ENCODE measurements at regions of chr2 and their contacts with region 1.

Region 1: GRCh38 chr2:231604685-231605606 is 12.3 kb downstream of the TEX44 start:
- DNase-seq: peak; percentile 100
- ATAC-seq: peak; percentile 88
- H3K4me3 ChIP-seq: peak overlapping the region in 4 of 5 experiments; percentile 55 to 65 (median 60)
- H3K4me3 Mint-ChIP-seq: peak overlapping the region; percentile 82
- H3K27ac ChIP-seq: peak overlapping the region; percentile 94
- H3K27ac Mint-ChIP-seq: peak overlapping the region; percentile 97
- H3K4me1 ChIP-seq: peaks cover 17 to 25% of the 10 kb centered on the region in 2 donors
- H3K4me1 Mint-ChIP-seq: peaks cover 31% of the 10 kb centered on the region
- H3K27me3 ChIP-seq: no peaks in the 10 kb centered on the region
- H3K27me3 Mint-ChIP-seq: no peaks in the 10 kb centered on the region
- CTCF ChIP-seq: no peak

Region 2: DNA sequence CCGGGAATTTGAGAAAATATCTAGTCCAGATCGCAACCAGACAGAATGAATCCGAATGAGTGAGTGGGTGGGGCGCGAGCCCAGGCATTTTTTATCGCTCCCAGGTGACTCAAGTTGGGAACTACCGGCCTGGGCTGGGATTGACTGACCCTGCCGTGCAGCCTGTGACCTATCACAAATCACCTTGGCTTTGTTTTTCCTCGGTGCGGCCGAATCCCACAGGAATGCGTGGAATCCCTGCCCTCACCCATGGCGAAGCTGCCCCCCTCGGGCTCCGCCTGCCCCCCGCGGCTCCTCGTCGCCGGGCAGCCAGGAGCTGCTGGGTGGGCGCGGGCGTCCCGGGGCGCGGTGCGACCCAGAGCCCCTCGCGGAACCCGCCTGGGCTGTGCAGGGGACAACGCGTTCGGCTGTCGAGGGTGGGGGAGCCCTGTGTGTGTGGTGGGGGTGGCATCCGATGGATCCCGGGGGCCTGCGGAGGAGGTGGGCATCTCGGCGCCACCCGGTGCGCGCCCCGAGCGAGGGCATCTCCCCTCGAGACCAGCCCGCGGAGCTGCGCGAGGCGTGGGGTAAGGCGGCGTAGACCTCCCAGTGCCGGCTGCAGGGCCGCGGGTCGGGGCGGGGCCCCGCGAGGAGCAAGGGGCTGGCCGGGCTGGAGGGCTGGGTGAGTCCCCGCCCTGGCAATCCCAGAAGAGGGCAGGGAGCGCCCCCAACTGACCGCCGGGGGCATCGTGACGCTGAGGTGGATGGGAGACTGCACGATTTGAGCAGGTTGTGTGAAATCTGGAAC is 192.9 kb before region 1 on chr2:
- CTCF ChIA-PET with region 1: no interaction called
- POLR2A ChIA-PET with region 1: no interaction called
- intact Hi-C with region 1: no loop called
- DNase-seq: peak; percentile 88
- ATAC-seq: peak; percentile 100
- H3K4me3 ChIP-seq: peak overlapping the region in 4 of 5 experiments; percentile 10 to 62 (median 52)
- H3K4me3 Mint-ChIP-seq: peak overlapping the region; percentile 80
- H3K27ac ChIP-seq: no peak overlapping the region
- H3K27ac Mint-ChIP-seq: no peak overlapping the region
- H3K4me1 ChIP-seq: peaks cover 12 to 13% of the 10 kb centered on the region in 2 donors
- H3K4me1 Mint-ChIP-seq: peaks cover 7% of the 10 kb centered on the region
- H3K27me3 ChIP-seq: peaks cover 0 to 24% (median 10%) of the 10 kb centered on the region in 4 experiments
- H3K27me3 Mint-ChIP-seq: peaks cover 21% of the 10 kb centered on the region
- CTCF ChIP-seq: peak; percentile 87

Region 3: DNA sequence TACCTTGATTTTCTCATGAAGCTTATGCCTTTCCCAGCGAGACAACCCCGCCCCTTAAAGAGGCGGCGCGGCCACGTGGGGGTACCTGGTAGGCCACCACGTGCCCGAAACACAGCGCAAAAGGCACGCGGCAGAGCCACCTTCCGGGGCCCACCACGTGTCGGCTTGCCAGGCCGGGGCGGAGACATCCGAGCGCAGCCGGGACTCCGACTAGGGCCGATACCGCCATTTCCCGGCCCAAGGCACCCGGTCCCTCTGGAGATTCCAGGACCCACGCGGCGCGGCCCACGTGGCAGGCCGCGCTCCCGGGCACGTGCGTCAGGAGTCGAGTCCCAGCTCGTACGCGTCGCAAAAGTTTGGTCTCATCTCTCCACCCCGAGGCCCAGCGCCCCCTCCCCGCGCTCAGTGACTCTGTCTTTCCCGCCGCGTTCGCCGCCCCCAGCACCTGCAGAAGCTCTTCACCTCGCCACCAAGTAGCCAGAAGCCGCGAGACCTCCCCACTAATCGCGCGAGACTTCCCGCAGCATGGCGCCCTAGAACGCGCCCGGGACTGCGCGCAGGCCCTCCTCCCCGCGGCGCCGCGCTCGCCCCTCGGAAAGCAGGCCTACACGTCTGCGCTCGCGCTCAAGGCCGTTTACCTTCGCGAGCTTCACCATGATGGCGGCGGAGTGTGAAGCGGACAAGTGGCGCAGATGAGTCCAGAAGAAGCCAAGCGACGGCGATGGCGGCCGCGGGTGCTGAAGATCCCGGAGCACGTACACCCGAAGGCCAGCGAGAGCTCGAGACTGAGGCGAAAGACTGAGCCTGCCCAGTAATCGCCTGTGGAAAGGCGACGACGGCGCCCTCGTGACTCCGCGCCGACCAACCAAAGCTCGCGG is 141.0 kb before region 1 on chr2 and contains the start of gene NCL:
- CTCF ChIA-PET with region 1: no interaction called
- POLR2A ChIA-PET with region 1: interaction called, 8 read pairs
- intact Hi-C with region 1: loop called (anchors 1 kb)
- DNase-seq: peak; percentile 98
- ATAC-seq: peak; percentile 51
- H3K4me3 ChIP-seq: peak within 1 kb of the TSS; percentile 62 to 97 (median 93)
- H3K4me3 Mint-ChIP-seq: peak within 1 kb of the TSS; percentile 99
- H3K27ac ChIP-seq: peak within 1 kb of the TSS; percentile 97 to 98
- H3K27ac Mint-ChIP-seq: peak within 1 kb of the TSS; percentile 100
- H3K4me1 ChIP-seq: peaks cover 29 to 33% of the 10 kb centered on the region in 2 donors
- H3K4me1 Mint-ChIP-seq: peaks cover 46% of the 10 kb centered on the region
- H3K27me3 ChIP-seq: no peaks in the 10 kb centered on the region
- H3K27me3 Mint-ChIP-seq: no peaks in the 10 kb centered on the region
- CTCF ChIP-seq: no peak
- total RNA-seq, gene NCL: 383 and 439 TPM in 2 replicates

Region 4: GRCh38 chr2:231514103-231514950 is 90.6 kb before region 1 on chr2:
- CTCF ChIA-PET with region 1: interaction called, 19 read pairs
- POLR2A ChIA-PET with region 1: no interaction called
- intact Hi-C with region 1: loop called (anchors 1 kb)
- DNase-seq: peak; percentile 99
- ATAC-seq: peak; percentile 98
- H3K4me3 ChIP-seq: peak overlapping the region; percentile 62 to 83 (median 75)
- H3K4me3 Mint-ChIP-seq: peak overlapping the region; percentile 94
- H3K27ac ChIP-seq: peak overlapping the region; percentile 92 to 93
- H3K27ac Mint-ChIP-seq: peak overlapping the region; percentile 98
- H3K4me1 ChIP-seq: peaks cover 11 to 13% of the 10 kb centered on the region in 2 donors
- H3K4me1 Mint-ChIP-seq: peaks cover 16% of the 10 kb centered on the region
- H3K27me3 ChIP-seq: no peaks in the 10 kb centered on the region
- H3K27me3 Mint-ChIP-seq: no peaks in the 10 kb centered on the region
- CTCF ChIP-seq: no peak

Region 5: DNA sequence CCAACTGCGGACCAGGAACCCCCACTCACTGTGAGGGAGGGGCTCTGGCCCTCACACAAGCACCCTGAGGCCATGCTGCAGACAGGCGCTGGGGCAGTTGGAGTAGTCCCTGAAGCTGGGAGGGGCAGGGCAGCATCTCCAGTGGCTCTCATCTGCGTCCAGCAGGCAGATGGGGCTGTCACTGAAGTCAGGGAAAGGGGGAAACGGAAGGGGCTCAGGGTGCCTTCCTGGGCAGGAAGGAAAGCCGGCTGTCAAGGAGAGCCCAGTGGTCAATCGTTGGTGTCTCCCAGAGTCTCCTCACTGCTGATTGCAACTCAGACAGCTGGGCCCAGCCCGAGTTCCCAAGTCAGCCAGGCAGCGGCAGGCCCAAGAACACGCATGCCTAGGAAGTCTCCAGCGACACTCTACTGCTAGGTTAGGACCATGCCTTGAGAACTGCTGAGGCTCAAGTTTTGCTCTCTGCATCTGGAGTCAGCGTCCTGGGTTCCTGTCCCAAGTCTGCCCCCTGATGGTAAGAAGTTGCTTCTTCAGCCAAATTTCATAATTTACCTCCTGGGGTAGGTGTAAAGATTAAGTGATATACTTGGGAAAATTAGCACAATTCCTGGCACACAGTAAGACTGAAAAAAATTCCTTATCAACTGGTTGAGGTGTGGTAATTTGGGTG is 47.2 kb before region 1 on chr2:
- CTCF ChIA-PET with region 1: interaction called, 16 read pairs
- POLR2A ChIA-PET with region 1: no interaction called
- intact Hi-C with region 1: no loop called
- DNase-seq: peak; percentile 85
- ATAC-seq: peak; percentile 88
- H3K4me3 ChIP-seq: no peak overlapping the region
- H3K4me3 Mint-ChIP-seq: no peak overlapping the region
- H3K27ac ChIP-seq: no peak overlapping the region
- H3K27ac Mint-ChIP-seq: no peak overlapping the region
- H3K4me1 ChIP-seq: peaks cover 26 to 28% of the 10 kb centered on the region in 2 donors
- H3K4me1 Mint-ChIP-seq: peaks cover 23% of the 10 kb centered on the region
- H3K27me3 ChIP-seq: no peaks in the 10 kb centered on the region
- H3K27me3 Mint-ChIP-seq: no peaks in the 10 kb centered on the region
- CTCF ChIP-seq: peak; percentile 82

Region 6: DNA sequence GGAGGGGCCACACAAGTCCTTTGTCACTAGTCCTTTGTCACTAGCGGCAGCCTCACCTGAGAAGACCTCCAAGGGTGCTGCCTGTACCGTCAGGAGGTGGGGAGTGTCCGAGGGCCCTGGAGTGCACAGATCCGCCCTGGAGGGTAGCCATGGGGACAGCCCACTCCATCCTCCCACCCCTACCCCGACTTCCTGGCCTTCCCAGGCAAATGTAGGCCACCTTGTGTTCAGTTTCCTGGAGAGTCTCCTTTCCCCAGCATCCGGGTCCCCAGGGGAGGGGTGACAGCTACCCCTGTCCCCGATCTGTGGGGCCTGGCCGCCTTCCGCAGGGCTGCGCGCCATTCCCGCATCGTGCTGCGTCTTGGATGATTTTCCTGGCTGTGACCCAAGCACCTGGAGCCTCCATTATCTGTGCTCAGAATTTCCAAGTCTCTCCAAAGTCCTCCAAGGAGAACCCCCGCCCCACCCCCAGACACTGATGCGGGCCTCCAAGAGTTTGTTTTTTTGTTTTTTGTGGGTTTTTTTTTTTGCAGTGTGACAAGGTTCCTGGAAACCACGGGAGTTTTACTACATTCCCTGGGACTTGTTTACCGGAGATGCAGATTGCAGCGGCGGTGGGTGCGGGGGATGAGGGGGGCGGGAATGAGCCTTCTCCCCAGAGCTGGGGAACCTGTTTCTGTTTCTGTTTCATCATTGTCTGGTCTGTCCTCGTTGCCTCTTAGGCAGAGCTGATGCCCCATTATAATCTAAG is 16.4 kb after region 1 on chr2:
- CTCF ChIA-PET with region 1: interaction called, 10 read pairs
- POLR2A ChIA-PET with region 1: no interaction called
- intact Hi-C with region 1: no loop called
- DNase-seq: no peak
- ATAC-seq: no peak
- H3K4me3 ChIP-seq: no peak overlapping the region
- H3K4me3 Mint-ChIP-seq: no peak overlapping the region
- H3K27ac ChIP-seq: no peak overlapping the region
- H3K27ac Mint-ChIP-seq: peak overlapping the region; percentile 37
- H3K4me1 ChIP-seq: no peaks in the 10 kb centered on the region
- H3K4me1 Mint-ChIP-seq: peaks cover 3% of the 10 kb centered on the region
- H3K27me3 ChIP-seq: peaks cover 0 to 3% (median 1%) of the 10 kb centered on the region in 4 experiments
- H3K27me3 Mint-ChIP-seq: no peaks in the 10 kb centered on the region
- CTCF ChIP-seq: no peak

Region 7: DNA sequence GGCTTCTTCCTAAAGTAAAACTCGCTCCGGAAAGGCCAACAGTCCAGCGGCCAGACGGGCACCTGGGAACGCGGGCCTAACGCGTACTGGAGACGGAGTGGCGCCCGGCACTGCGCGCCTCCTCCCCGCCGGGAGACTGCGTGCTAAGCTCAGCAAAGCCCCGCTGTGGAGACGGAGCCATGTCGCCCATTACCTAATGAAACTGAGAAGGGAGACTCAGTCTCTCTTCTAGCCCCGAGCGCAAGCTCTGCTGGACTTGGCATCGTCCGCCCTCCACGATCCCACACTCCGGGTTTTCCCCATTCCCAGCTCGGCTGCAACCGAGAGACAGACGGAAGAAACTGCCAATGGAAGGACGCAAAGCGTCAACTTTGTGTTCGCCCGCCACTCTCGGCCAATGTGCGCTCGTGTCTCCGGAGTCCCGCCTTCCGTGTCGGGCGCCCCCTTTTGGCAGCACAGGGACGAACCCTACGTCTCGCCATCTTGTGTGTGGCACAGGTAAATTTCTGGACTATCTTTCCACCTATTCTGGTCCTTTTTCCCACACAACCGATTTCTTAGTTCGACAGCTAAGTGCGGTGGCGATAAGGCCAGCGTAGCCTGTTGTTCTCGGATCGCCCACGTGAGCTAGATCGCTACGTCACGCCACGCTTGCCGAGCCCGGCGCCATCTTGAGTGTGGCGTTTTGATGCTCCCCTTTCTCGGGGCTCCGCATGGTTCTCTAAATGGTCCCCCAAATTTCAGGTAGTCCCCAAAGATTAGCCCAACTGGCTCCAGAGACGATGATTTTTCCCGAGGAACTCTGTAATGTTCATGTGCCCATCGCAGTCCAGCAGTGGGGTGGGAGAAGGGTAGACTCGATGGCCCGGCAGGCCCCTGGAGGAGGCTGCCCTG is 102.0 kb after region 1 on chr2:
- CTCF ChIA-PET with region 1: interaction called, 320 read pairs
- POLR2A ChIA-PET with region 1: interaction called, 69 read pairs
- intact Hi-C with region 1: no loop called
- DNase-seq: peak; percentile 98
- ATAC-seq: peak; percentile 48
- H3K4me3 ChIP-seq: peak overlapping the region; percentile 77 to 99 (median 89)
- H3K4me3 Mint-ChIP-seq: peak overlapping the region; percentile 99
- H3K27ac ChIP-seq: peak overlapping the region; percentile 98 to 99
- H3K27ac Mint-ChIP-seq: peak overlapping the region; percentile 100
- H3K4me1 ChIP-seq: peaks cover 20 to 38% of the 10 kb centered on the region in 2 donors
- H3K4me1 Mint-ChIP-seq: peaks cover 28% of the 10 kb centered on the region
- H3K27me3 ChIP-seq: no peaks in the 10 kb centered on the region
- H3K27me3 Mint-ChIP-seq: no peaks in the 10 kb centered on the region
- CTCF ChIP-seq: peak; percentile 96

Region 8: DNA sequence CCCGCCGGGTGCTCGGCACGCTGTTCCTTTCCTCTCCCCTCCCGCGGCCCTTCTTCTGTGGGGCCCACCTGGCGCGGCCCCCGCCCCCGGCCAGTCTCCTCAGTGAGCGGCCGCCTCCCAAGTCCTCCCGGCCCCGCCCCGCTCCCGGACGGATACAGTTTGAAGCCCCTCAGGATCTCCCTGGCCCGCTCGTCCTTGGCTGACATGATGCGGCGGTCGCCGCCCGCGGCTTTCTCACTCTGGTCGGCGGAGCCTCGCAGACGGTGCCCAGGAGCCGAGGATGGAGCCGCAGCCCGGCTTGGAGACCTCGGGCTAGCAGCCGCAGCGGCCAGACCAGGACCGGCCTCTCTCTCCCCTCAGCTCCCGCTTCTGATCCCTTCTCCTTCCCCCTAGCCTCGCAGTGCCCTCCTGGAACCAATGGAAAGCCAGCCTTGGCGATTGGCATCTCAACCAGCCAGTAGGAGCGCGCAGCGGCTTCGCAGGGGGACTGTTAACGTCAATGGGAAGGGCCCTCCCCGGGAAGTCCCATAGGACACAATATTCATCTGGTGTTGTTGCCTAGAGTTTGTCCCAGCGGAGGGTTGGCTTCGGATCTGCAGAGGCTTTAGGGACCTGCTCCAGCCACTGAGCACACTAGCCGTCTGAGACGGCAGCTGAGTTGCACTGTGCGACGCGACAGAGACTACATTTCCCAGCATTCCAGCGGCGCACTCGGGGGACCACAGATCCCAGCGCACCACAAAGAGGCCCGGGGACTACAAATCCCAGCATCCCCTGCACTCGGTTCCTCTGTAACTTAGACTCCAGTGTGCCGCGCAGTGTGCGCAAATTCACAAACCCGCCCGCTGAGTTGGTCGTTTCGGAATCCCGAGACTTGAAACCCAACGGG is 176.2 kb after region 1 on chr2 and contains the start of gene PDE6D:
- CTCF ChIA-PET with region 1: no interaction called
- POLR2A ChIA-PET with region 1: interaction called, 4 read pairs
- intact Hi-C with region 1: loop called (anchors 2 kb)
- DNase-seq: peak; percentile 98
- ATAC-seq: peak; percentile 89
- H3K4me3 ChIP-seq: peak within 1 kb of the TSS; percentile 72 to 92 (median 85)
- H3K4me3 Mint-ChIP-seq: peak within 1 kb of the TSS; percentile 100
- H3K27ac ChIP-seq: peak within 1 kb of the TSS; percentile 63 to 87
- H3K27ac Mint-ChIP-seq: peak within 1 kb of the TSS; percentile 97
- H3K4me1 ChIP-seq: peaks cover 28 to 32% of the 10 kb centered on the region in 2 donors
- H3K4me1 Mint-ChIP-seq: peaks cover 63% of the 10 kb centered on the region
- H3K27me3 ChIP-seq: no peaks in the 10 kb centered on the region
- H3K27me3 Mint-ChIP-seq: no peaks in the 10 kb centered on the region
- CTCF ChIP-seq: no peak
- total RNA-seq, gene PDE6D: 31.9 and 40.8 TPM in 2 replicates

Measured in B cell (primary cell).